PC-9 (cell line): ENCODE measurements at regions of chr13 and their contacts with region 1.

Region 1: GRCh38 chr13:105598529-105598928 is 936.9 kb downstream of the EFNB2 start:
- DNase-seq: no peak
- H3K4me3 ChIP-seq: no peak overlapping the region
- H3K27ac ChIP-seq: no peak overlapping the region
- H3K4me1 ChIP-seq: no peaks in the 10 kb centered on the region
- H3K27me3 ChIP-seq: no peaks in the 10 kb centered on the region
- CTCF ChIP-seq: no peak

Region 2: GRCh38 chr13:106028911-106029310 is 430.4 kb after region 1 on chr13:
- CTCF ChIA-PET with region 1: no interaction called
- POLR2A ChIA-PET with region 1: no interaction called
- intact Hi-C with region 1: loop called (anchors 5 kb)
- DNase-seq: no peak
- H3K4me3 ChIP-seq: no peak overlapping the region
- H3K27ac ChIP-seq: no peak overlapping the region
- H3K4me1 ChIP-seq: peaks cover 8% of the 10 kb centered on the region; the same call in 1 of the 2 replicates
- H3K27me3 ChIP-seq: no peaks in the 10 kb centered on the region
- CTCF ChIP-seq: no peak